Breast epithelium (tissue), 4 donors: ENCODE measurements at regions of chr11 and their contacts with region 1.

Region 1: DNA sequence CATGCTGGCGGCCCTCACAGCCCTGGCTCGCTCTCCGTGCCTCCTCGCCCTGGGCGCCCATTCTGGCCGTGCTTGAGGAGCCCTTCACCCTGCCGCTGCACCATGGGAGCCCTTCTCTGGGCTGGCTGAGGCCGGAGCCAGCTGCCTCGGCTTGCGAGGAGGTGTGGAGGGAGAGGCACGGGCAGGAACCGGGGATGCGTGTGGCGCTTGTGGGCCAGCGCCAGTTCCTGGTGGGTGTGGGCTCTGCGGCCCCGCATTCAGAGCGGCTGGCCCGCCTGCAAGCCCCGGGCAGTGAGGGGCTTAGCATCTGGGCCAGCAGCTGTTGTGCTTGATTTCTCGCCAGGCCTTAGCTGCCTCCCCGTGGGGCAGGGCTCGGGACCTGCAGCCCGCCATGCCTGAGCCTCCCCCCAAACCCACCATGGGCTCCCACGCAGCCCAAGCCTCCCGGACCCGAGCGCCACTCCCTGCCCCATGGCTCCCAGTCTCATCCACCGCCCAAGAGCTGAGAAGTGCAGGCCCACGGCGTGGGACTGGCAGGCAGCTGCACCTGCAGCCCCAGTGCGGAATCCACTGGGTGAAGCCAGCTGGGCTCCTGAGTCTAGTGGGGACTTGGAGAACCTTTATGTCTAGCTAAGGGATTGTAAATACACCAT is 163.4 kb upstream of the LRRC4C start:
- DNase-seq: no peak
- H3K4me3 ChIP-seq: no peak overlapping the region
- H3K27ac ChIP-seq: no peak overlapping the region
- H3K4me1 ChIP-seq: no peaks in the 10 kb centered on the region
- H3K27me3 ChIP-seq: no peaks in the 10 kb centered on the region
- CTCF ChIP-seq: no peak
- POLR2A ChIP-seq: no peak

Region 2: DNA sequence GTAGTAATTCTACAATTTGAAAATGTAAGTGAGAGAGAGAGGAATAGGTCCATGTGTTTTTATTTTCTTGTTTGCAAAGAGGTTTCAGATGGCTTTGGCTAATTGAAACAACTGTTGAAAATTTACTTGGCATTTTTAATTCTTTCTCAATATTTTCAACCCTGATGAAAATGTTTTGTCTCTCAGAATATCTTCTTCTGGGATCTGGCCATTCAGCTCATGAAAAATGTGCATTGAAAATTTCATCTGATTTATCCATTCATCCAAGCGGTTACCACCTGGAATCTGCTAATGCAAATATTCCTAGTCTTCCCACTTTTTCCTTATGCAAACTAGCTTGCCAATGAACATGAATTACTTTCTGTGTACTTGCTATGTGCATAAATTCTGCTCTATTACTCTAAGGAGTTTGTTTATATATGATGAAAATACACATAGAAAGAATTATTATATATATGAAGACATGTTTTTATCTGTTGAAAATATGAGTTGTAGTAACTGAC is 784.6 kb before region 1 on chr11:
- intact Hi-C with region 1: no loop called
- DNase-seq: no peak
- H3K4me3 ChIP-seq: no peak overlapping the region
- H3K27ac ChIP-seq: no peak overlapping the region
- H3K4me1 ChIP-seq: no peaks in the 10 kb centered on the region
- H3K27me3 ChIP-seq: no peaks in the 10 kb centered on the region
- CTCF ChIP-seq: no peak
- POLR2A ChIP-seq: no peak

Region 3: GRCh38 chr11:41254966-41255365 is 367.9 kb before region 1 on chr11:
- intact Hi-C with region 1: loop called (anchors 5 kb)
- DNase-seq: no peak
- H3K4me3 ChIP-seq: no peak overlapping the region
- H3K27ac ChIP-seq: no peak overlapping the region
- H3K4me1 ChIP-seq: no peaks in the 10 kb centered on the region
- H3K27me3 ChIP-seq: no peaks in the 10 kb centered on the region
- CTCF ChIP-seq: no peak
- POLR2A ChIP-seq: no peak